ENCODE measurements at regions of chr16 and their contacts with region 1.

Region 1: GRCh38 chr16:2752035-2752849 is at the start of gene SRRM2:
- DNase-seq: peak; percentile 97
- ATAC-seq: peak; percentile 90
- H3K4me3 Mint-ChIP-seq: peak within 1 kb of the TSS; percentile 99
- H3K27ac Mint-ChIP-seq: peak within 1 kb of the TSS; percentile 98
- H3K4me1 Mint-ChIP-seq: peaks cover 45% of the 10 kb centered on the region
- H3K27me3 Mint-ChIP-seq: no peaks in the 10 kb centered on the region
- total RNA-seq, gene SRRM2: 517 to 598 TPM

Region 2: GRCh38 chr16:2223375-2224182 is 528.7 kb before region 1 on chr16 and contains the start of gene E4F1:
- CTCF ChIA-PET with region 1: no interaction called
- POLR2A ChIA-PET with region 1: no interaction called
- intact Hi-C with region 1: loop called in 1 of 2 experiments (anchors 10 kb)
- DNase-seq: peak; percentile 100
- ATAC-seq: peak; percentile 99
- H3K4me3 Mint-ChIP-seq: peak within 1 kb of the TSS; percentile 78
- H3K27ac Mint-ChIP-seq: peak within 1 kb of the TSS; percentile 13
- H3K4me1 Mint-ChIP-seq: peaks cover 15% of the 10 kb centered on the region
- H3K27me3 Mint-ChIP-seq: no peaks in the 10 kb centered on the region
- total RNA-seq, gene E4F1: 18.0 to 18.6 TPM

Region 3: DNA sequence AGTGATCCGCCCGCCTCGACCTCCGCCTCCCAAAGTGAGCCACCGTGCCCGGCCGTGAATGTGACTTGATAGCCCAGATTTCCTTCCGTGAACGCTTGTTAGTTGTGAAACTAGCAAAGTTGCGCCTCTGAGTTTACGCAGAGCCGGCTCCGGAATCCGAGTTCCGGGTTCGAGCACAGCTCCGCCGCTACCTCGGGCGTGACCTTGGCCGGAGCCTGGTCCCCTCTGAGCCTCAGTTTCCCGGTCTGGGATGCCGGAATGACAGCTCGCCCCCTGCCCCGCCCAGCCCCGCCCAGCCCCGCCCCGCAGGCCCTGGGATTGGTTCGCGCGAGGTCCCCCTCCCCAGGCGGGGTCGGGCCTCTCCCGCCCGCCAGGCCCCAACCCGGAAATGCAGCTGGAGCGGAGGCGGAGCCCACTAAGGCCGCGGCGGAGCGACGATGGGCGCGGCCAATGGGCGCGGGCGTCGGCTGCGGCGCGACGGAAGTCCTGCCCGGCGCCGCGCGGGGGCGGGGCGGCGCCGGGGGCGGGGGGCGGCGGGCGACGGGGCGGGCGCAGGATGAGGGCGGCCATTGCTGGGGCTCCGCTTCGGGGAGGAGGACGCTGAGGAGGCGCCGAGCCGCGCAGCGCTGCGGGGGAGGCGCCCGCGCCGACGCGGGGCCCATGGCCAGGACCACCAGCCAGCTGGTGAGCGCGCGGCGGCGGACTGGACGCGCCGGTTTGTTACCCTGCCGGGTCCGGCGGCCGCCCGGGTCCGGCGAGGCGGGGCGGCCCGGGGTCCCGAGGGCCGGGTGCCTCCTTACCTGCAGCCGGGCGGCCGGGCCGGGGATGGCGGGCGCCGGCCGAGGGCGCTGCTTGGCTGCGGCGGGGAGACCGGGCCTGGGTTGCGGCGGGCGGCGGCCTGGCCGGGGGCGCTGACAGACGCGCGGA is 214.5 kb before region 1 on chr16 and contains the start of gene PDPK1:
- CTCF ChIA-PET with region 1: no interaction called
- POLR2A ChIA-PET with region 1: no interaction called
- intact Hi-C with region 1: loop called in 1 of 2 experiments (anchors 1 kb)
- DNase-seq: peak; percentile 97
- ATAC-seq: peak; percentile 93
- H3K4me3 Mint-ChIP-seq: peak within 1 kb of the TSS; percentile 83
- H3K27ac Mint-ChIP-seq: peak within 1 kb of the TSS; percentile 90
- H3K4me1 Mint-ChIP-seq: peaks cover 38% of the 10 kb centered on the region
- H3K27me3 Mint-ChIP-seq: no peaks in the 10 kb centered on the region
- total RNA-seq, gene PDPK1: 30.4 to 34.5 TPM

Region 4: GRCh38 chr16:2720719-2721633 is 31.3 kb before region 1 on chr16:
- CTCF ChIA-PET with region 1: no interaction called
- POLR2A ChIA-PET with region 1: no interaction called
- intact Hi-C with region 1: loop called in 1 of 2 experiments (anchors 1 kb)
- DNase-seq: peak; percentile 95
- ATAC-seq: peak; percentile 91
- H3K4me3 Mint-ChIP-seq: peak overlapping the region; percentile 77
- H3K27ac Mint-ChIP-seq: peak overlapping the region; percentile 83
- H3K4me1 Mint-ChIP-seq: no peaks in the 10 kb centered on the region
- H3K27me3 Mint-ChIP-seq: peaks cover 9% of the 10 kb centered on the region

Region 5: GRCh38 chr16:2867987-2868789 is 115.9 kb after region 1 on chr16:
- CTCF ChIA-PET with region 1: interaction called, 3 read pairs
- POLR2A ChIA-PET with region 1: no interaction called
- intact Hi-C with region 1: loop called in 1 of 2 experiments (anchors 1 kb)
- DNase-seq: peak; percentile 98
- ATAC-seq: peak; percentile 97
- H3K4me3 Mint-ChIP-seq: peak overlapping the region; percentile 81
- H3K27ac Mint-ChIP-seq: peak overlapping the region; percentile 85
- H3K4me1 Mint-ChIP-seq: peaks cover 7% of the 10 kb centered on the region
- H3K27me3 Mint-ChIP-seq: no peaks in the 10 kb centered on the region

Region 6: DNA sequence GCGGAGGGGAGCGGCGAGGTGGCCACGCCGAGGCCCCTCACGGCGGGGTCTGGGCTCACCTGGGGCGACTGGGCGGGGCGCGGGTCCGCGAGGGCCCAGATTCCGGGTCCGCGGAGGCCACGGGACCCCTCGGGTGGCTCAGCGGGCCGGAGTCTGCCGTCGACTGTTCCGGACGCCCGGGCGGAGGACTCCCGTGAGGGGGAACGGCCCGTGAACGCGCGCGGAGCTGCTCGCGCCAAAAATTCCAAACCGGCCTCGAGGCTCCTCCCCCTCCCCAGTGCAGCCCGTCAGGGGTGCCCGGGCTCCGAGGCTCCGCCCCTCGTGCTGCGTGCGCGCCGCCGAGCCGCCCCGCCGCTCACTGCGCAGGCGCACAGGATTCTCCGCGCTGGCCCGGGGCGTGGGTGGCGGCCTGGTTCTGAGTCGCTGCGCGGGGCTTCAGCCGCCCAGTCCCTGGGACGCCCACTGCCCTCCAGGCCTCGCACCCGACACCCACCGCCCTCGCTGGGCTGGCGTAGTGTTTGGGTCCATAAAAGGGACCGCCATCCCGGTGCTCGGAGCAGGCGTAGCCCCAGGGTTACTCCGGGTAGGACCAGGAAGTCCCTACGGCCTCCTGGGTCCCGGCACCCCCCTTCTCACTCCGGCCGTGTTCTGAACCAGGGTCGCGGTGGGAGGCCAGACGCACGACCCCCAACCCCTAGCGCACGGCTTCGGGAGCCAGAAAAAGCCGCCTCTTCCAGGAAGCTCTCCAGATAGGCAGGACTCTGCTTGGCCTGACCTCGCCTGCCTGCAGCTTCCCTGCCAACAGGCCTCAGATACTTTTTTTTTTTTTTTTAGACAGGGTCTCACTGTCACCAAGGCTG is 228.2 kb after region 1 on chr16 and contains the start of gene PKMYT1:
- CTCF ChIA-PET with region 1: no interaction called
- POLR2A ChIA-PET with region 1: no interaction called
- intact Hi-C with region 1: loop called in 1 of 2 experiments (anchors 1 kb)
- DNase-seq: peak; percentile 97
- ATAC-seq: peak; percentile 91
- H3K4me3 Mint-ChIP-seq: peak within 1 kb of the TSS; percentile 87
- H3K27ac Mint-ChIP-seq: peak within 1 kb of the TSS; percentile 84
- H3K4me1 Mint-ChIP-seq: peaks cover 6% of the 10 kb centered on the region
- H3K27me3 Mint-ChIP-seq: peaks cover 2% of the 10 kb centered on the region
- total RNA-seq, gene PKMYT1: 101 to 117 TPM

Measured in activated CD4-positive, alpha-beta T cell treated with anti-CD3 and anti-CD28 coated beads for 36 hours (primary cell).